Prostate gland (tissue), 2 donors: ENCODE measurements at regions of chr12 and their contacts with region 1.

Region 1: DNA sequence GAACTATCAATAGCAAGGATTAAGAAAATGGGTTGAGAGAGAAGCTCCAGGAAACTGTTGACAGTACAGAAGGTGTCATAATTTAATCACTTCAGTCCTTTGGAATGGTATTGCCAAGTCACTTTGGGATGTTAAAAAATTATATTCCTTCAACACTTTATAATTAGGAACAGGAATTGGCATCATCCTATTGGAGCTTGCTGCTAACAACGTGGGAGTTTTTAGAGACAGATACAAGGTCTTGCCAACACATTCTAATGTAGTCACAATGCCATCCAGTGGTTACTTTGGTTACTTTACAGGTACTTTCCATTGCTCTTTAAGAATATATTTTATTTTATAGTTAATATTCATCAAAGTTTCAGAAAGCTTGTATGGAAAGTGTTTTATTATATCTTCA is 310.1 kb downstream of the SYT1 start:
- DNase-seq: no peak
- H3K4me3 ChIP-seq: no peak overlapping the region
- H3K27ac ChIP-seq: no peak overlapping the region
- H3K4me1 ChIP-seq: no peaks in the 10 kb centered on the region
- H3K27me3 ChIP-seq: no peaks in the 10 kb centered on the region
- CTCF ChIP-seq: peak in 3 of 4 experiments; percentile 35 to 55 (median 39)
- POLR2A ChIP-seq: no peak

Region 2: DNA sequence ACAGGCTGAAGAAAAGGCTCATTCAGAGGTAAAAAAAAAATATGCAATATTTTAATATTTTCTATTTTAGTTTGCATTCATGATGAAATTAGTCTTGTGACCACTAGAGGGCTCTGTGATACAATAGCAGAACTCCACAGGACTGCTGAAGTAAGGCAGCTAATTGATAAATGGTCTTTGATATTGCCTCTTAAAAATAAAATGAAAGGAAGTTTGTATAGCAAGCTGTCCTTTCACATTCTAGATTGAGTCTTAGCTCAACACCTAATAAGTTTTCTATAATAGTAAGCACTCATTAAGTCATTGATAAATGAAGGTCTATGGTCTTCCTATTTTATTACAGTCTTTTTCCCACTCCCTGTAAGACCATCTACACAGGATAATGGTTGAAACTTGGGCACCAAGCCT is 1028.3 kb before region 1 on chr12:
- intact Hi-C with region 1: loop called (anchors 10 kb)
- DNase-seq: no peak
- H3K4me3 ChIP-seq: no peak overlapping the region
- H3K27ac ChIP-seq: no peak overlapping the region
- H3K4me1 ChIP-seq: no peaks in the 10 kb centered on the region
- H3K27me3 ChIP-seq: no peaks in the 10 kb centered on the region
- CTCF ChIP-seq: peak; percentile 4 to 71 (median 58)
- POLR2A ChIP-seq: no peak

Region 3: GRCh38 chr12:78392918-78393317 is 781.7 kb before region 1 on chr12:
- intact Hi-C with region 1: loop called (anchors 5 kb)
- DNase-seq: no peak
- H3K4me3 ChIP-seq: no peak overlapping the region
- H3K27ac ChIP-seq: no peak overlapping the region
- H3K4me1 ChIP-seq: no peaks in the 10 kb centered on the region
- H3K27me3 ChIP-seq: no peaks in the 10 kb centered on the region
- CTCF ChIP-seq: peak in 1 of 4 experiments; percentile 26
- POLR2A ChIP-seq: no peak

Region 4: DNA sequence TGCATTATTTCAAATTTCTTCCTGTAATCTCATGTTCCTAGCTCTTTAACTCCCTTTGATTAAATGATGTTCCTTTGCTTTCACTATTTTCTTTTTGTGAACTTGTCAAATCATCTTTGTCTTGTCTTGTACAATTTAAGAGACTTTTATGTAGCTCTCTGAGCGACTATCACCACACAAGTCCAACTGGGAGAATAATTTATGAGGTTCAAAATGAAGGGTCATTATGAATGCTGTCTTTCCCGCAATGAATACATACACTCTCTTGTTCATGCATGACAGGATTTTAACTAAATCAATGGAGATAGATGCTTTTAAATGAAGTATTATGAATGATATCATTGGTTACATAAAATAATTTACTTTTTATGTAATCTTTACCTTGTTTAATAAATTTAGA is 108.7 kb after region 1 on chr12:
- intact Hi-C with region 1: no loop called
- DNase-seq: no peak
- H3K4me3 ChIP-seq: no peak overlapping the region
- H3K27ac ChIP-seq: no peak overlapping the region
- H3K4me1 ChIP-seq: no peaks in the 10 kb centered on the region
- H3K27me3 ChIP-seq: no peaks in the 10 kb centered on the region
- CTCF ChIP-seq: no peak
- POLR2A ChIP-seq: no peak